Heart left ventricle (tissue), 16 donors: ENCODE measurements at regions of chr2 and their contacts with region 1.

Region 1: GRCh38 chr2:121722479-121722878 is 14.2 kb downstream of the NIFK start:
- DNase-seq: no peak
- ATAC-seq: peak; percentile 56 to 82 (median 74)
- H3K4me3 ChIP-seq: no peak overlapping the region
- H3K27ac ChIP-seq: peak overlapping the region in 2 of 12 donors; percentile 18 to 26
- H3K4me1 ChIP-seq: peaks cover 0 to 15% (median 0%) of the 10 kb centered on the region in 12 donors
- H3K27me3 ChIP-seq: no peaks in the 10 kb centered on the region
- CTCF ChIP-seq: no peak
- POLR2A ChIP-seq: no peak

Region 2: GRCh38 chr2:121400201-121400600 is 322.3 kb before region 1 on chr2:
- intact Hi-C with region 1: loop called (anchors 2 to 10 kb)
- DNase-seq: no peak
- ATAC-seq: no peak
- H3K4me3 ChIP-seq: no peak overlapping the region
- H3K27ac ChIP-seq: no peak overlapping the region
- H3K4me1 ChIP-seq: no peaks in the 10 kb centered on the region
- H3K27me3 ChIP-seq: no peaks in the 10 kb centered on the region
- CTCF ChIP-seq: no peak
- POLR2A ChIP-seq: no peak

Region 3: DNA sequence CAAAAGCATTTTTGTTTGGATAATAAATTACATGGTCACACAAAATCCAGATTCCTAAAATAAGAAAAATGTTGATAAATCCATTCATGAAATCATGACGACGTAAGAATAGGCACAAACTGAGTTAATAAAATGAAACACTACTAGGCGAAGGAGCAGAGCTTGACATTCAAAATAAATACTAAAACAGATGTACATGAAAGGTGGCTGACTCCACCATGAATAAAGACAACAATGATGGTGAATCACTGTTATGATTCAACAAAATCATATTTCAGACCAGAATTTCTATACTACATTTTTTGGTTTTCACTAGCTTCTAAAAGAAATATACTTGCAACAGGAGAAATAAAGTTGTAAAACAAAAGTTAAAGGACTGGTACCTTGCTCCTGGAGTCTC is 313.8 kb before region 1 on chr2:
- intact Hi-C with region 1: loop called (anchors 2 to 10 kb)
- DNase-seq: no peak
- ATAC-seq: no peak
- H3K4me3 ChIP-seq: no peak overlapping the region
- H3K27ac ChIP-seq: no peak overlapping the region
- H3K4me1 ChIP-seq: no peaks in the 10 kb centered on the region
- H3K27me3 ChIP-seq: no peaks in the 10 kb centered on the region
- CTCF ChIP-seq: no peak
- POLR2A ChIP-seq: no peak

Region 4: GRCh38 chr2:121596221-121597080 is 126.0 kb before region 1 on chr2:
- intact Hi-C with region 1: loop called in 4 of 10 experiments (anchors 5 to 10 kb)
- DNase-seq: peak in 1 of 5 donors; percentile 31
- ATAC-seq: peak; percentile 50 to 81 (median 72)
- H3K4me3 ChIP-seq: peak overlapping the region in 8 of 12 donors; percentile 4 to 37 (median 25)
- H3K27ac ChIP-seq: peak overlapping the region; percentile 25 to 82 (median 58)
- H3K4me1 ChIP-seq: peaks cover 0 to 50% (median 27%) of the 10 kb centered on the region in 12 donors
- H3K27me3 ChIP-seq: no peaks in the 10 kb centered on the region
- CTCF ChIP-seq: peak; percentile 25 to 75 (median 56)
- POLR2A ChIP-seq: no peak